Activated T-helper 2 cell treated with anti-CD3 and anti-CD28 coated beads, Interferon-gamma antibody, Interleukin-2, Interleukin-4, amounts not matched to agents 10 μg/mL and 5 μg/mL and 100 μg/mL, durations not matched to agents 14 hours and 24 hours and 36 hours (primary cell): ENCODE measurements at regions of chr9 and their contacts with region 1.

Region 1: DNA sequence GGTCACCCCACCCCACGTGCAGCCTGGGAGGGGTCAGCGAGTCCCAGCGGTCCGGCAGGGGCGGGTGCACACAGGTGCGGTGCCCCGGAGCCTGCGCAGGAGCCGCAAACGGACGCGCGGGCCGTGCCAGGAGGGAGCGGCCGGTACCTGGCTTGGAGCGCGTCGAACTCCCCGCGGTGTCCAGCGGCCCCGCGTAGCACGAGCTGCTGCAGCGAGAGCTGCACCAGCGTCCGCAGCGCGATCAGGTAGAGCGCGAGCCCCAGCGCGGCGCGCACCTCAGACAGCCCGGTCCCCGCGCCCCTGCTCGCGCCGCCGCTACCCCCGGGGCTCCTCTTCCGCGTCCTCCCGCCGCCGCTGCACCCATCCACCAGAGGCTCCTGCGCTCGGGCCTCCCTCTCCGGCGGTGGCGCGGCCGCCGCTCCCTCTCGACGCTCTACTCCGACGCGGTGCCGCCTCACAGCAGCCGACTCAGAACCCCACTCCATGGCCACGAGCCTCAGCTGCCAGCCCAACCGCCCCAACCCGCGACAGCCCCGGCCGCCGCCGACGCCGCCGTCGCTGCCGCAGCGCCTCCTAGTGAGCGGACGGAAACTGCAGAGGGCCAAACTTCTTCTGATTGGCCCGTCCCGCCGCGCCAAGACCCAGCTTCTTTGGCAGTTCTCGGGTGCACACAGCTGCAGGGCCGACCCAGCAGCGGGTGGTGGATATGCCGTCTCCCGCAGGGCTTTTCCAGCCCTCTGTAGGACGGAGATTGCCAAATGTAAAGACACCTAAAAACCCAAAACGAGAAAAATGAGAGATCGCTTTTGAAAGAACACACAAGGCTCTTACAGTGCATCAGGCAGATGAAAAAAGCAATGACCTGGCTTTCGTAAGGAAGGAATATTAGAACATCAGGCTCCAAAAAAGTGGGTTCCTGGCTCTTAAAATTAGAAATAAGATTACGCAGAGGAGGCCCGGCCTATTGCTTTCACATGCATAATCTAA is at the start of gene ERMP1:
- DNase-seq: peak; percentile 87
- H3K4me3 Mint-ChIP-seq: peak within 1 kb of the TSS; percentile 94
- H3K27ac Mint-ChIP-seq: peak within 1 kb of the TSS; percentile 79
- H3K4me1 Mint-ChIP-seq: peaks cover 53% of the 10 kb centered on the region
- H3K27me3 Mint-ChIP-seq: no peaks in the 10 kb centered on the region
- total RNA-seq, gene ERMP1: 21.1 and 25.3 TPM in 2 replicates

Region 2: GRCh38 chr9:5773324-5773999 is 59.4 kb before region 1 on chr9:
- intact Hi-C with region 1: no loop called
- DNase-seq: no peak
- H3K4me3 Mint-ChIP-seq: no peak overlapping the region
- H3K27ac Mint-ChIP-seq: peak overlapping the region; percentile 8
- H3K4me1 Mint-ChIP-seq: peaks cover 3% of the 10 kb centered on the region
- H3K27me3 Mint-ChIP-seq: no peaks in the 10 kb centered on the region

Region 3: DNA sequence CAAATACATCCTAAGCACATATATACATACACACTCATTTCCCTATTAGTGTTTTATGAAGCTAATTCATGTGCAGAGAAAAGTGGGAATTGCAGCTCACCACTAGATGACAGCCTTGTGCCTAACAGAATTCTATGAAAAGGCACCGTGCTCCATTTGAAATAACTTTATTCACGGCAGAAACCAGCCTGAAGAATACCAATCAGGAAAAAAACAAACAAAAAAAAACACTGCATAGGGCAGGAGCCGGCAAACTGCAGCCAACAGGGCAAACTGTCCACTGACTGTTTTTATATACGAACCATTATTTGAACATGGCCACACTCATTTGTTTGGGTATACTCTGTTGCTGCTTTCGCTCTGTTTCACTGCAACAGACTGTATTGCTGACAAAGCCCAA is 33.5 kb before region 1 on chr9:
- intact Hi-C with region 1: loop called (anchors 5 kb)
- DNase-seq: no peak
- H3K4me3 Mint-ChIP-seq: no peak overlapping the region
- H3K27ac Mint-ChIP-seq: peak overlapping the region; percentile 46
- H3K4me1 Mint-ChIP-seq: peaks cover 39% of the 10 kb centered on the region
- H3K27me3 Mint-ChIP-seq: no peaks in the 10 kb centered on the region

Region 4: GRCh38 chr9:5843794-5844504 is 11.1 kb after region 1 on chr9:
- intact Hi-C with region 1: loop called (anchors 1 kb)
- DNase-seq: no peak
- H3K4me3 Mint-ChIP-seq: peak overlapping the region; percentile 64
- H3K27ac Mint-ChIP-seq: peak overlapping the region; percentile 95
- H3K4me1 Mint-ChIP-seq: peaks cover 79% of the 10 kb centered on the region
- H3K27me3 Mint-ChIP-seq: no peaks in the 10 kb centered on the region

Region 5: DNA sequence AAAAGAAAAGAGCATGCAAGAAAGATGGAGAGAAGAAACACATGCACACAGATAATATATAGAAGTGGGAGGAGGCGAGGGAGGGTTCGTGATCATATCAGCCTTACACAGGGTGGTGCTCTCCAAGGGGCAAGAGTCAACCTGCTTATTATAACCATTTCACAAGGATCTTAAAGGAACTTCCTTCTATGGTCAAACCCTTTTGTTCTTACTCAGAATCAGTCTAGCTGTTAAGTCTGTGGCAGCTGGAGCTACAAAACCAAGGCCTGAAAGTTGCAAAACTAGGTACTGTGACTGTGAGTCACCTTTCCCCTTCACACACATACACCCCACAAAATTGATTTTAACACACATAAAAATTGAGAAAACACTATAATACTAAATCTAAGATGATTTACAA is 18.6 kb after region 1 on chr9:
- intact Hi-C with region 1: loop called (anchors 2 kb)
- DNase-seq: peak; percentile 48
- H3K4me3 Mint-ChIP-seq: peak overlapping the region; percentile 15
- H3K27ac Mint-ChIP-seq: peak overlapping the region; percentile 75
- H3K4me1 Mint-ChIP-seq: peaks cover 67% of the 10 kb centered on the region
- H3K27me3 Mint-ChIP-seq: no peaks in the 10 kb centered on the region

Region 6: DNA sequence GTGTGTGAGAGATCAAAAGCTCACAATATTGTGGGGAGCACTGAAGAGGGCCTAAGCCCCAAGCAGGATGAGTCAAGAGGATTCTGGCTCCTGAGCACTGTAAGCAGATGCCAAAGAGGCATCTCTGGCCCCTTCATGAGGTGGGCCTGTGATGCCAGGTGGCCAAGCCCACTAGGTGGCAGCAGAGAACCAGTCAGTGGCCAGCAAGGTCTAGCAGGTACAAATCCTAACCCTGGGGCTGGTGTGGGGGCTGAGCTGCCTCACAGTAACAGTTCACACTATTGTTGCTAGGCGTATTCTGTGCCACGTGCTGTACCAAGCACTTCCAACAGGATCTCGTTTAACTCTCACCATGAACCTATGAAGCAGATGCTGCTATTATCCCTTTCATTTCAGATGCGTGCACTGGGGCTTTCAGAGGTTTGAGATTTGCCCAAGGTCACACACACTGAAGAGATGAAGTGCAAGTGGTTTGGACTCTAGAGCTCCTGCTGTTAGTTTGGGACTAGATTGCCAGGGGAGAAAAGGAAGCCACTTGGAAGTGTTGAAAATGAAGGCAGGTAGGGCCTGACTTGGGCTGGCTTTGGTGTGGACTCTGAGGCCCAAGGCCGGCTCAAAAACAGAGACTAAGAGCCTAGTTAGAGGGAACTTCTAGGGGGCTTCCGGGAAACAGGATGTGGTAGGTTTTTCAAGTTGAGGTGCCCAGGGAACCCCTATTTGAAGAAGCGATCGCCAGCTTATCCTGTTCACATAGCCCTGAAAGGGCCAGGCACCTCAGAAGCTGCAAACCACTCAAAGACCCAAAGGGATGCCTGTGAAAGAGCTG is 53.5 kb after region 1 on chr9:
- intact Hi-C with region 1: loop called (anchors 2 kb)
- DNase-seq: peak; percentile 67
- H3K4me3 Mint-ChIP-seq: no peak overlapping the region
- H3K27ac Mint-ChIP-seq: no peak overlapping the region
- H3K4me1 Mint-ChIP-seq: peaks cover 7% of the 10 kb centered on the region
- H3K27me3 Mint-ChIP-seq: peaks cover 5% of the 10 kb centered on the region

Region 7: DNA sequence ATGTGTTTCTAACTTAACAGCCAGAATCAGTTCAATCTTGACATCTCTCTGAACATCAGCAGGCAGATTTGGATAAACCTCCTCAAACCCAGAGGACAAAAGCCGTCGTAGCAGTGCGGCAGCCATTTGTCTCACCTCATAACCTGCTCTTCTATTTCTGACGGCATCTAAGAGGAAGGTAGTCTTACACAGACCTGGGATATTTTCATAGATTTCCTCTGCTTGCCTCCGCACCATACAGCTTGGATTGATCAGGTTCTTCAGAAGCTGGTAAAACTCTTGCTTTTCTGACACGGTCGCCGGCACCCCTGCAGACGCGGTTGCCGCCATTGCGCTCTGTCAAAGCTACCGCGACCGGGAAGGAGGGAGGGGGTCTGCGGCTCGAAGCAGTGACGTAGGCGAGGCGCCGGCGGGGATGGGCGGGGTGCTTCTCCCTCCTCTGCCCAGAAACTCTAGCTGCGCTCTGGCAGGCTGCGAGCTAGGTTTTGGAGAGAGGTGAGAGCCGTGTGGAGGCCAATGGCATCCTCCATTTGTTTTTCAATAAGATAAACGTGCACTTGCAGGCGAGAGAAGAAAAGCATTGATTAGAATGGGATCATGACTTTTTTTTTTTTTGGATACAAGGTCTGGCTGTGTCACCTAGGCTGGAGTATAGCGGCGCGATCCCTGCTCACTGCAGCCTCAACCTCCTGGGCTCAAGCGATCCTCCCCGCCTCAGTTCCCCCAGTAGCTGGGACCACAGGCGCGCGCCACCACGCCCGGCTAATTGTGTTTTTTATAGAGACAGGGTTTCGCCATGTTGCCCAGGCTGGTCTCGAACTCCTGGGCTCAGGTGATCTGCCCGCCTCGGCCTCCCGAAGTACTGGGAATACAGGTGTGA is 182.7 kb after region 1 on chr9 and contains the start of gene RANBP6:
- intact Hi-C with region 1: loop called (anchors 2 kb)
- DNase-seq: peak; percentile 87
- H3K4me3 Mint-ChIP-seq: peak within 1 kb of the TSS; percentile 93
- H3K27ac Mint-ChIP-seq: peak within 1 kb of the TSS; percentile 97
- H3K4me1 Mint-ChIP-seq: peaks cover 33% of the 10 kb centered on the region
- H3K27me3 Mint-ChIP-seq: no peaks in the 10 kb centered on the region
- total RNA-seq, gene RANBP6: 20.1 and 21.1 TPM in 2 replicates

Region 8: DNA sequence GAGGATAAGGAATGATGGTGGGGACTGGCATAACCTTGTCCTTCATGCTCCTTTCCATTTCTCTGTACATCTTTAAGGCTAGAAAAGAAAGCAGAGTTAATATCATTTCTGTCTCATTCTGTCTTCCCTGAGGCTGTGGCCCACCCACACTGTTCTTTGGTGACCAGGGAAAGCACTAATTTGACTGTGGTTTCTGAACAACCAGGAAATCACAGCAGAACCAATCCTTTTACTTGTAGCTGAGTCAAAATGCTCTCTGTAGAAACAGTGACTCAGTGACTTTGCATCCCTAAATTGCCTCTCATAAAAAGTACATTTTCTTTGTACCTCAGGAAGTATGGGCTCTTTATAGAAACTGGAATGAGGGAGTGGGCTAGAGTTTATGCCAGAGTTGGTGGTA is 410.9 kb after region 1 on chr9:
- intact Hi-C with region 1: no loop called
- DNase-seq: no peak
- H3K4me3 Mint-ChIP-seq: no peak overlapping the region
- H3K27ac Mint-ChIP-seq: no peak overlapping the region
- H3K4me1 Mint-ChIP-seq: peaks cover 8% of the 10 kb centered on the region
- H3K27me3 Mint-ChIP-seq: peaks cover 18% of the 10 kb centered on the region